ENCODE measurements at regions of chr7 and their contacts with region 1.

Region 1: GRCh38 chr7:116911801-116912200 is 41.5 kb upstream of the ST7 start:
- DNase-seq: peak; percentile 56
- H3K4me3 ChIP-seq: no peak overlapping the region
- H3K27ac ChIP-seq: no peak overlapping the region
- H3K4me1 ChIP-seq: peaks cover 11% of the 10 kb centered on the region
- H3K27me3 ChIP-seq: no peaks in the 10 kb centered on the region
- CTCF ChIP-seq: no peak

Region 2: GRCh38 chr7:116872026-116872425 is 39.8 kb before region 1 on chr7:
- CTCF ChIA-PET with region 1: no interaction called
- dilution Hi-C with region 1: loop called (anchors 5 kb)
- in situ Hi-C with region 1: no loop called
- intact Hi-C with region 1: no loop called
- DNase-seq: no peak
- H3K4me3 ChIP-seq: no peak overlapping the region
- H3K27ac ChIP-seq: no peak overlapping the region
- H3K4me1 ChIP-seq: peaks cover 8% of the 10 kb centered on the region
- H3K27me3 ChIP-seq: no peaks in the 10 kb centered on the region
- CTCF ChIP-seq: no peak

Region 3: DNA sequence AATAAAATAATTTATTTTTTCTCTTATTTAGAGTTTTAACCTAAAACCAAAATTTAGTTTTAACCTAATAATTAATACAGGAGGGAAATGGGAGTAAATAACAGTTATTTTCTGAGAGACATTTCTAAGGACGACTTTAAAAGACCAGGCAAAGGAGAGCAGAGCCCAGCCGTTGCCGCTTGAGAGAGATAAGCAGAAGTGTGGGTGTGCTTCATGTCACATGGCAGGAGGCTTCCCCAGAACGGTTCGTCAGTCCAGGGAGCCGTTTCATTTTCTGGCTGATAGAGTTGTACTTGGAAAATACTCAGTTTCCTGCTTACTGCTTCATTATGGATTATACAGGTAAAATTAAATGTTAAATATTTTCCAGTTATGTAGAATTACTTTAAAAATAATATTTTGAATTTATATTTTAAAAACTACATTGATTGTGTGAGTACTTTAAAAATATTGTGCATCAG is 102.9 kb after region 1 on chr7:
- CTCF ChIA-PET with region 1: no interaction called
- dilution Hi-C with region 1: no loop called
- in situ Hi-C with region 1: no loop called
- intact Hi-C with region 1: no loop called
- DNase-seq: peak; percentile 54
- H3K4me3 ChIP-seq: peak overlapping the region; percentile 2 to 37 (median 20)
- H3K27ac ChIP-seq: peak overlapping the region; percentile 58
- H3K4me1 ChIP-seq: peaks cover 43% of the 10 kb centered on the region
- H3K27me3 ChIP-seq: no peaks in the 10 kb centered on the region
- CTCF ChIP-seq: no peak